ENCODE measurements at regions of chr6 and their contacts with region 1.

Region 1: DNA sequence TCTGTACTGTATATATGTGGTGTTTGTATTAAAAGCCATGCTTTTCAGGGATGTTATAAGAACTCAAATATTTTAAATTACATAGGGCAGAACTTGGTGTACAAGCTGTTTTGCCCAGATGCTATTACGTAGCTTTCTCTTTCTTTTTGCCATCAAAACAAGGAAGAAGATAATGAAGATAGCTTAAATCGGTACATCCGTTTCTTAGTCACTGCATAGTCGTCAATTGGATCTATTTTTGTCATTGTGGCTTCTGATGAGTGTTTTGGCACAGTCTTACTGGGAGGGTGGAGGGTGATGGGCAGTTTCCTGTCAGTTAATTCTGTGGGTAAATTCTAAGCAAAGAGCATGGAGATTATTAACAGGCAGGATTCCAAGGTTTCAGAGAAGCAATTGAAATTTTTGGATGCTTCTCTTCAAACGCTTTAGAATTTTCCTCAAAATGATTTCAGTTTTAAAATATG is 649.1 kb upstream of the GJE1 start:
- DNase-seq: no peak
- ATAC-seq: peak; percentile 79
- H3K4me3 Mint-ChIP-seq: peak overlapping the region; percentile 78
- H3K27ac Mint-ChIP-seq: peak overlapping the region; percentile 96
- H3K4me1 Mint-ChIP-seq: peaks cover 52% of the 10 kb centered on the region
- H3K27me3 Mint-ChIP-seq: no peaks in the 10 kb centered on the region
- CTCF ChIP-seq: no peak

Region 2: DNA sequence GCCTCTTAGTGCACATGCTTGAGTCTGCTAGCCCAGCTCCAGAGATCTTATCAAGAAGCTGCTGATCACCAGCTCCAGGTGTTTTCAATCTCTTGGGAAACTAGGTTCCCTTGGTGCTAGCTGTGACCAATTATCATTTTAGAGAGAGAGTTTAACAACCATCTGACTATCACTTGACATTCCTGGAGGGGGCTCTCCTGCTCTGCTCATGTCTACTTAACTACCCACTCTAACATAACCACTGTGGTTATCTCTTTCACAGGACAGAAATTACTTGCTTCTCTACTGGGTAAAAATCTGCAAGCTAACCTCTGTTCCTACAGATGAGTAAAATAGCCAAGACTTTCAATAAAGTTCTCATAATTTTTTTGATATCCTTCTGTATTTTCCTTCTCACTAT is 174.3 kb before region 1 on chr6:
- CTCF ChIA-PET with region 1: no interaction called
- POLR2A ChIA-PET with region 1: no interaction called
- intact Hi-C with region 1: loop called (anchors 5 kb)
- DNase-seq: no peak
- ATAC-seq: peak; percentile 54
- H3K4me3 Mint-ChIP-seq: no peak overlapping the region
- H3K27ac Mint-ChIP-seq: no peak overlapping the region
- H3K4me1 Mint-ChIP-seq: peaks cover 4% of the 10 kb centered on the region
- H3K27me3 Mint-ChIP-seq: no peaks in the 10 kb centered on the region
- CTCF ChIP-seq: no peak

Region 3: DNA sequence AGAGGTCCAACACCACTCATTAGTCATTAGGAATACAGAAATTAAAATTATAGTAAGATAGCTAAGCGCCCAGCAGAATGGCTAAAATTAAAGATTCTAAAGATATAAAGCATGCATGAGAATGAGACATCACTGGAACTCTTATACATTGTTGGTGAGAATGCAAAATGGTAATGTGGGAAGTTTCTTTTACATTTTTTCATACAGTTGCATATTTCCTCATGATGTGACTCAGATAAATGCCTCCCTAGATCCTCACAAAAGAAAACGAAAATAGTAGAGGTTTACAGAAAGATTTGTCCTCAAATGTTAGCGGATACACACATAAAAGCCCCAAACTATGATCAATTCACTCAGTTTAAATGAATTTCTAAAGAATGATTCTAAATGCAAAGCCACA is 15.3 kb after region 1 on chr6:
- CTCF ChIA-PET with region 1: interaction called, 7 read pairs
- POLR2A ChIA-PET with region 1: interaction called, 21 read pairs
- intact Hi-C with region 1: loop called (anchors 1 kb)
- DNase-seq: no peak
- ATAC-seq: no peak
- H3K4me3 Mint-ChIP-seq: no peak overlapping the region
- H3K27ac Mint-ChIP-seq: no peak overlapping the region
- H3K4me1 Mint-ChIP-seq: peaks cover 19% of the 10 kb centered on the region
- H3K27me3 Mint-ChIP-seq: no peaks in the 10 kb centered on the region
- CTCF ChIP-seq: no peak

Region 4: DNA sequence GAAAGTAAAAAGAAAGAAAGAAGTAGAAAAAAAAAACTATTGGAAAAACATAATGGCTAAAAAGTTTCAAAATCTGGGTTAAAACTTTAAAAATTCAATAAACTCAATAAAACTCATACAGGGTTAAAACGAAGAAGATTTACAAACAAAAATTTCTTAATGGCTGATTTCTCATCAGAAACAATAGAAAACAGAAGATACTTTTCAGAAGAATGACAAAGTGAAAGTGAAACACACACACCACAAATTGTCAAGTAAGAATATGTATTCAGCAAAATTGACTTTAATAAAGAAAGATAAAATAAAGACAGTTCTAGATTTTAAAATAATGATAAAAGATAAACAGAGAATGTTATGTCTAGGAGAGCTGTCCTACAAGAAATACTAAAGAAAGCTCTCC is 30.2 kb after region 1 on chr6:
- CTCF ChIA-PET with region 1: no interaction called
- POLR2A ChIA-PET with region 1: no interaction called
- intact Hi-C with region 1: loop called (anchors 2 kb)
- DNase-seq: no peak
- ATAC-seq: no peak
- H3K4me3 Mint-ChIP-seq: no peak overlapping the region
- H3K27ac Mint-ChIP-seq: no peak overlapping the region
- H3K4me1 Mint-ChIP-seq: peaks cover 4% of the 10 kb centered on the region
- H3K27me3 Mint-ChIP-seq: no peaks in the 10 kb centered on the region
- CTCF ChIP-seq: no peak

Region 5: DNA sequence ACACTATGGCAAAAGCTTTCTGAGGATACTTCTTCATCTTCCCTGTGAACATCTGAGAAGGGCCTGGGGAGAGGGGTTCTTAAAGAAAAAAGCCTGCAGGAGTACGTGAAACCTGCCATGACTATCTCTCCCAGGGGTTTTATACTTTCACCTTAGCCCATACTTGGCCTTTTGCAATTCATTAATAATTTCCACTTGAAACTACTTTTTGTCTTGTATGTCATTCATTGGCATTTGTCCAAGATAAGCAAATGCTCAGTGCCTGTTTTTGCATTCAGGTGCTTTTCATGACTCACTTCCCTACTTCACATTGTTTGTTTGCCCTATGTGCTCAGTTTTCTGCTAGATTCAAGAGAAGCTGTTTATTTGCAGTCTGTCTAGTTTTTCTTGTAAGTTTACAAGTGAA is 68.8 kb after region 1 on chr6:
- CTCF ChIA-PET with region 1: interaction called, 3 read pairs
- POLR2A ChIA-PET with region 1: no interaction called
- intact Hi-C with region 1: loop called (anchors 1 kb)
- DNase-seq: no peak
- ATAC-seq: peak; percentile 40
- H3K4me3 Mint-ChIP-seq: no peak overlapping the region
- H3K27ac Mint-ChIP-seq: no peak overlapping the region
- H3K4me1 Mint-ChIP-seq: peaks cover 17% of the 10 kb centered on the region
- H3K27me3 Mint-ChIP-seq: no peaks in the 10 kb centered on the region
- CTCF ChIP-seq: no peak

Measured in activated B cell treated with CpG ODN at 0.5 μM for 24 hours (primary cell).